Endothelial cell of umbilical vein (primary cell): ENCODE measurements at regions of chr6 and their contacts with region 1.

Region 1: GRCh38 chr6:75526502-75527127 is 33.0 kb upstream of the FILIP1 start:
- DNase-seq: peak; percentile 87
- H3K4me3 ChIP-seq: no peak overlapping the region
- H3K27ac ChIP-seq: no peak overlapping the region
- H3K4me1 ChIP-seq: peaks cover 14% of the 10 kb centered on the region
- H3K27me3 ChIP-seq: peaks cover 2 to 3% of the 10 kb centered on the region in 2 experiments
- CTCF ChIP-seq: peak; percentile 48 to 54
- POLR2A ChIP-seq: no peak

Region 2: DNA sequence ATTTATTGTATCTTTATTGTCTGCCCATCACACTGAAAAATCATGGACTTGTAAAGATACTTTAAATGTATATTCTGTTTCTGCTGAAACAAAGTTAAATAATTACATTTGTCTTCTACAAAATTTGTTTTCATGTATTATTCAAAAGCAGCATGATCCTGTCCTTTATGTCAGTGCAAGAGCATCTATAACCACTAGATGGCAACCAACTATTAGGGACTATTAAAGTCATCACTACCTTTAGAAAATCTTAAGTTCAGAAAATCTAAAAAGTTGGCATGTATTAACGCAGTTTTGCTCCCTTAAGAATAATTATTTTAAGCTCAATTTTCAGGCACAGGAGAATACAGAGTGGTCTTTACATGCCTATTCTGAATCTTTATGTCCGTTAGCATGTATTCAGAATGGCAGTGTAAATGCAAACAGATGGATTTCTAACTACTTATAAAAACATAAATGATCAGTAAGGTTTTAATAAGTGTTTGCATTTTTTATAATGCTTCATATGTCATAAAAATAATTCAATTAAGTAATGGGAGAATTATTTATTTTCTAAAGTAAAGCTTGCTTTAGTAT is 259.8 kb before region 1 on chr6:
- CTCF ChIA-PET with region 1: interaction called, 39 read pairs
- POLR2A ChIA-PET with region 1: no interaction called
- dilution Hi-C with region 1: no loop called
- intact Hi-C with region 1: loop called (anchors 1 kb)
- DNase-seq: peak; percentile 75
- H3K4me3 ChIP-seq: no peak overlapping the region
- H3K27ac ChIP-seq: no peak overlapping the region
- H3K4me1 ChIP-seq: peaks cover 19% of the 10 kb centered on the region
- H3K27me3 ChIP-seq: no peaks in the 10 kb centered on the region
- CTCF ChIP-seq: peak; percentile 58 to 59
- POLR2A ChIP-seq: no peak

Region 3: GRCh38 chr6:75317503-75318206 is 209.0 kb before region 1 on chr6:
- CTCF ChIA-PET with region 1: interaction called, 9 read pairs
- POLR2A ChIA-PET with region 1: no interaction called
- dilution Hi-C with region 1: loop called (anchors 25 kb)
- intact Hi-C with region 1: no loop called
- DNase-seq: peak; percentile 71
- H3K4me3 ChIP-seq: no peak overlapping the region
- H3K27ac ChIP-seq: peak overlapping the region; percentile 13
- H3K4me1 ChIP-seq: peaks cover 10% of the 10 kb centered on the region
- H3K27me3 ChIP-seq: peaks cover 0 to 11% of the 10 kb centered on the region in 2 experiments
- CTCF ChIP-seq: no peak
- POLR2A ChIP-seq: no peak

Region 4: DNA sequence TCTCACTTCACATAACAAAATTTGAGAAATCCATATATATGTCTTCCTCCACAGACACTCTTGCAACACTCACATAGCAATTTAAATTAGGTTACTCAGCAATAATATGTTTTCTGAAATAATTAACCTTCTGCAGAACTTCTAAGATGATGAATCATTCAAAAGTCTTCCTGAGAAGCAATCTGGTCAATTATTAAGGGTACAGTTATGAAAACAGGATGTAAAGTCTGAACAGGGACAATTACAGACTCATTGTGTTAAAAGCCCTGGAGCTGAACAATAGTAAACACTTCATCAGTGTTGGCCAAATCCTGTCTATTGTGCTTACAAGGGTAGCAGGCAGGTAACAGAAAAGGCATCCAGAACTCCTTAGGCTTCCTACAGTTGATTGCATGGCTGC is 108.4 kb before region 1 on chr6:
- CTCF ChIA-PET with region 1: interaction called, 5 read pairs
- POLR2A ChIA-PET with region 1: interaction called, 4 read pairs
- dilution Hi-C with region 1: no loop called
- intact Hi-C with region 1: loop called (anchors 1 kb)
- DNase-seq: peak; percentile 94
- H3K4me3 ChIP-seq: no peak overlapping the region
- H3K27ac ChIP-seq: peak overlapping the region; percentile 81
- H3K4me1 ChIP-seq: peaks cover 48% of the 10 kb centered on the region
- H3K27me3 ChIP-seq: no peaks in the 10 kb centered on the region
- CTCF ChIP-seq: no peak
- POLR2A ChIP-seq: peak; percentile 17

Region 5: GRCh38 chr6:75493400-75494064 is 33.1 kb before region 1 on chr6 and contains the start of gene FILIP1:
- CTCF ChIA-PET with region 1: interaction called, 3 read pairs
- POLR2A ChIA-PET with region 1: no interaction called
- dilution Hi-C with region 1: no loop called
- intact Hi-C with region 1: loop called (anchors 1 kb)
- DNase-seq: no peak
- H3K4me3 ChIP-seq: peak within 1 kb of the TSS in 1 of 3 experiments; percentile 7
- H3K27ac ChIP-seq: no peak within 1 kb of the TSS
- H3K4me1 ChIP-seq: peaks cover 22% of the 10 kb centered on the region
- H3K27me3 ChIP-seq: no peaks in the 10 kb centered on the region
- CTCF ChIP-seq: no peak
- POLR2A ChIP-seq: no peak
- total RNA-seq, gene FILIP1: 12.6 and 13.7 TPM in 2 replicates